ENCODE measurements at regions of chr9 and their contacts with region 1.

Region 1: DNA sequence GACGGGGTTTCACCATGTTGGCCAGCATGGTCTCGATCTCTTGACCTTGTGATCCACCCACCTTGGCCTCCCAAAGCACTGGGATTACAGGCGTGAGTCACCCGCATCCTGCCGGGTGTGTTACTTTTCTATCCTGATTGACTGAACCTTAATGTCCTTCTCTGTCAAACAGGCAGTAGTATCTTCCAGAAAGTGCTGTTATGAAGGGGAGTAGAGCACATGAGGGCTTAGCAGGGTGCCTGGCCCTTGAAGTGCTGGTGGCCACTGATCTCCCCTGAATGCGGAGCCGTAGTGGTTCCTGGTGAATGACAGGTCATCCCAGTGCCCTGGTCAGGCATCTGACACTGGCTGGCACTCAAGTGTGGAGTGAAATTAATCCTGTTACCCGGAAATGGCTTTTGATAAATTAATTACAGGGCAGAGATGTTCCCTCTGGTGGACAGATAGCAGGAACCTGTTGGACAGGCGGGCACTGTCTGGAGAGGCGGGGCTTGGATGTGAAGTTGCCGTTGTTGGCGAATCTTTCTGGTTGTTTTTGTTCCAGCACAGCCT is 28.4 kb downstream of the PRRC2B start:
- DNase-seq: peak; percentile 59 to 64
- H3K4me3 ChIP-seq: no peak overlapping the region
- H3K27ac ChIP-seq: peak overlapping the region; percentile 47
- H3K4me1 ChIP-seq: peaks cover 43% of the 10 kb centered on the region
- H3K27me3 ChIP-seq: no peaks in the 10 kb centered on the region
- CTCF ChIP-seq: peak; percentile 41; the same call in 1 of the 2 replicates

Region 2: GRCh38 chr9:131349881-131350563 is 72.3 kb before region 1 on chr9:
- CTCF ChIA-PET with region 1: interaction called, 4 read pairs
- POLR2A ChIA-PET with region 1: no interaction called
- intact Hi-C with region 1: loop called (anchors 1 kb)
- DNase-seq: peak; percentile 58 to 88
- H3K4me3 ChIP-seq: peak overlapping the region; percentile 41; the same call in 1 of the 2 replicates
- H3K27ac ChIP-seq: no peak overlapping the region
- H3K4me1 ChIP-seq: no peaks in the 10 kb centered on the region
- H3K27me3 ChIP-seq: no peaks in the 10 kb centered on the region
- CTCF ChIP-seq: peak; percentile 79

Region 3: GRCh38 chr9:131366761-131367401 is 55.4 kb before region 1 on chr9:
- CTCF ChIA-PET with region 1: no interaction called
- POLR2A ChIA-PET with region 1: no interaction called
- intact Hi-C with region 1: loop called (anchors 1 kb)
- DNase-seq: peak; percentile 64 to 72
- H3K4me3 ChIP-seq: no peak overlapping the region
- H3K27ac ChIP-seq: no peak overlapping the region
- H3K4me1 ChIP-seq: peaks cover 19% of the 10 kb centered on the region
- H3K27me3 ChIP-seq: no peaks in the 10 kb centered on the region
- CTCF ChIP-seq: no peak; the same call in 1 of the 2 replicates

Region 4: DNA sequence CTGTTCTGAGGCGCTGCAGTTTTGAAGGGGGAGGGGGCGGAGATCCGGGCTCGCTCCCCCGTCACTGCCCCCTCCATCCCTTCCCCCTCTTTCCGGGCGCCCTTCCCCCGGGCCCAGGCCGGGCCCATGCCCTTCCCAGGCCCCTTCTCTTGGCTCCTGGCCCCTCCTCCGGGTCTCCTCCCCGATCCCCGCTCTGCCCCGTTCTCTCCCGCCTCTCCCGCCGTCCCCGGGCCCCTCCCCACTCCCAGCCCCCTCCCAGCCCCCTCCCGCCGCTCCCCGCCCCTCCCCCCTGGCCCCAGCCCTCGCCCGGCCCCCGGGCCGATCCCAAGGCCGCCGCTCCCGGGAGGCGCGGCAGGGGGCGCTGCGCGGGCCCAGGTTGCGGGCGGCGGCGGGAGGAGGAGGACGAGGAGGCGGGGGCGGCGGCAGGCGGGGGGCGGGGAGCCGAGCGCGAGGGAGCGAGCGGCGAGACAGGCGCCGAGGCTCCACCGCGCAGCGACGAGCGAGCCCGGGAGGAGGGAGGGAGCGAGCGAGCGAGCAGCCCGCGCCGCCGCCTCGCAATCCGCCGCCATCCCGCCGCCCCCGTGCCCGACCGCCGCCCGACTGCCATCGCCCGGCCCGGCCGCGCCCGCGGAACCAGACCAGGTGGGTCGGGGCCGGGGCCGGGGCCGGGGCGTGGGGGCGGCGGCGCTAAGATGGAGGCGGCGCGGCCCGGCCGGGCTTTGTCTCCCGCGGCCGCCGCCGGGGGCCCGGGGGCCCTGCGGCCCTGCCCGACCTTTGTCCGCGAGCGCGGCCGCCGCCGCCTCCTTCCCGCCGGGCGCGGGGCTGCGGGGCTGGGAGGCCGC is 28.5 kb before region 1 on chr9 and contains the start of gene PRRC2B:
- CTCF ChIA-PET with region 1: no interaction called
- POLR2A ChIA-PET with region 1: interaction called, 13 read pairs
- intact Hi-C with region 1: loop called (anchors 1 kb)
- DNase-seq: peak; percentile 49 to 91
- H3K4me3 ChIP-seq: peak within 1 kb of the TSS; percentile 97
- H3K27ac ChIP-seq: peak within 1 kb of the TSS; percentile 73
- H3K4me1 ChIP-seq: peaks cover 50% of the 10 kb centered on the region
- H3K27me3 ChIP-seq: no peaks in the 10 kb centered on the region
- CTCF ChIP-seq: 0 out of 2 replicates have a peak, but pooled peaks have one; percentile 20
- total RNA-seq, gene PRRC2B: 307 and 361 TPM in 2 replicates